GM10248 (cell line): ENCODE measurements at regions of chr12 and their contacts with region 1.

Region 1: GRCh38 chr12:90945070-90945649 is 9.8 kb downstream of the CCER1 start:
- DNase-seq: peak; percentile 26
- CTCF ChIP-seq: peak; percentile 42

Region 2: GRCh38 chr12:90883456-90883855 is 61.7 kb before region 1 on chr12:
- CTCF ChIA-PET with region 1: no interaction called
- POLR2A ChIA-PET with region 1: no interaction called
- DNase-seq: no peak
- CTCF ChIP-seq: no peak

Region 3: GRCh38 chr12:90959538-90960139 is 14.5 kb after region 1 on chr12:
- CTCF ChIA-PET with region 1: interaction called, 12 read pairs
- POLR2A ChIA-PET with region 1: no interaction called
- DNase-seq: peak; percentile 26
- CTCF ChIP-seq: peak; percentile 73